IMR-90 (cell line): ENCODE measurements at regions of chr5 and their contacts with region 1.

Region 1: GRCh38 chr5:35926389-35927051 is 11.9 kb downstream of the CAPSL start:
- DNase-seq: peak; percentile 50
- ATAC-seq: peak; percentile 61
- H3K4me3 ChIP-seq: no peak overlapping the region
- H3K27ac ChIP-seq: no peak overlapping the region
- H3K4me1 ChIP-seq: peaks cover 3% of the 10 kb centered on the region; the same call in 1 of the 2 replicates
- H3K27me3 ChIP-seq: no peaks in the 10 kb centered on the region
- CTCF ChIP-seq: peak; percentile 82
- POLR2A ChIP-seq: no peak
- RAD21 ChIP-seq: peak; percentile 94

Region 2: DNA sequence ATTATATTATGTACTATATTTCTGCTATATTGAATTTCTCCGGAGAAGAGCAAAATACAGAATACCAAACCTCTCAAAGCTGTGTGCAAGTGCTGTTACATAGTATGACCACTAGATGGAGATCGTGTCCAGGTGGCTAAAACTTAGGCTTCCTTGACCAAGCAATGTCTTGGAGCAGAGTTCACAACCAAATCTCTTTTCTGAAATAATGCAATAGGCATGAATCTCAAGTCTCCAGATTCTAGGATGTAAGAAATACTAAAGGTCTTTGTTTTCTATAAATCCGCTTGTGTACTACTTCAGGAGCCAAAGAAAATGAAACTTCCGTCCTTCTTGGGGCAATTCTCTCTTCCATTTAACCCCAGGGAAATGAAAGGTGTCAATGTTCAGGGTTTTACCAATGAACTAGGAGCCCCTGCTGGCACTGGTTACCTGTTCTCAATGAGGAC is 1451.9 kb before region 1 on chr5:
- CTCF ChIA-PET with region 1: no interaction called
- POLR2A ChIA-PET with region 1: no interaction called
- dilution Hi-C with region 1: no loop called
- in situ Hi-C with region 1: no loop called
- intact Hi-C with region 1: loop called (anchors 10 kb)
- DNase-seq: peak; percentile 77
- ATAC-seq: peak; percentile 99
- H3K4me3 ChIP-seq: no peak overlapping the region
- H3K27ac ChIP-seq: no peak overlapping the region
- H3K4me1 ChIP-seq: no peaks in the 10 kb centered on the region
- H3K27me3 ChIP-seq: peaks cover 16% of the 10 kb centered on the region
- CTCF ChIP-seq: peak; percentile 94
- POLR2A ChIP-seq: peak; percentile 45; the same call in 1 of the 2 replicates
- RAD21 ChIP-seq: peak; percentile 96

Region 3: DNA sequence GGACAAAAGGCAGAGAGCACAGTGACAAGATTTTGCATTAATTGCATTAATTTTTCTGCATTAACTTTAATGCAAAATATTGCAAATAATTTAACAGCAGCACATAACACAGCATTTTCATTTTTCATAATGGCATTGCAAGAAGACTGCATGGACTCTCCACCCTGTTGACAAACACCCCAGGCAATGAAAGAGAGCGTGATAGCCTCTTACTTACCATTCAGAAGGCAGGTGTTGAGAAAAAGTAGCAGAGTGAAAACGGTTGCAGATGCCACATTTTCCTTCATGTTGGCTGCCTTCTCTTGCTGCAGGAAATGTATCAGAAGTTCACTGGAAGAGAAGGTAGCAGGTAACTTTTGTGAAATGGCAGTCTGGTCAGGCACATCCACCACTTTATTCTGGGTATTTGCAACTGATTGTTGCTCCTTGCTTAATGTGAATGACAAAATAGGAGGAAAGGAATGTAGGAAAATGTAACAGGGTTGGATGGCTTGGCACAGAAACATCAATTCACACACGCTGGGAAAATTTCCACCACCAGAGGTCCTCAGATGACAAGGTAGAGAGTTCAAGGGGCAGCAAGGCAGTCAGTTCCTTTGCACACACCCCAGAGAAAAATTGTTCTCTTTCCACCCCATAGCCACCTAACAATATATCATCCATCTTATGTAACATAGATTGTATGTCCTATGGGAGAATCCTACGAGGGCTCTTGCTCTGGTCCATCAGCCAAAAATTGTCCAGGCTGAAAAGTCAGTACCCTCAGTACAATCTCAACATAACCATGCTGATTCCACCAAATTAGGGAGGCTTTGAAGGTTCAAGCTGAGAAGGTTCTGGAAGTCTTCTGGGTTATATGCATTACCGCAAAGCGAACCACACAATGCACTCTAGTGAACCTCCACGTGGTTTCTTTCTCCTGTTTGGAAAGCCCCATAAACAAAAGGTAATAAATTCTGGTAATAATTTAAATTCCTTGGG is 836.9 kb before region 1 on chr5:
- CTCF ChIA-PET with region 1: interaction called, 3 read pairs
- POLR2A ChIA-PET with region 1: no interaction called
- dilution Hi-C with region 1: no loop called
- in situ Hi-C with region 1: loop called (anchors 5 kb)
- intact Hi-C with region 1: loop called (anchors 1 kb)
- DNase-seq: peak; percentile 72
- ATAC-seq: peak; percentile 86
- H3K4me3 ChIP-seq: no peak overlapping the region
- H3K27ac ChIP-seq: no peak overlapping the region
- H3K4me1 ChIP-seq: peaks cover 4% of the 10 kb centered on the region; the same call in 1 of the 2 replicates
- H3K27me3 ChIP-seq: peaks cover 6% of the 10 kb centered on the region
- CTCF ChIP-seq: peak; percentile 90
- POLR2A ChIP-seq: no peak
- RAD21 ChIP-seq: peak; percentile 97

Region 4: DNA sequence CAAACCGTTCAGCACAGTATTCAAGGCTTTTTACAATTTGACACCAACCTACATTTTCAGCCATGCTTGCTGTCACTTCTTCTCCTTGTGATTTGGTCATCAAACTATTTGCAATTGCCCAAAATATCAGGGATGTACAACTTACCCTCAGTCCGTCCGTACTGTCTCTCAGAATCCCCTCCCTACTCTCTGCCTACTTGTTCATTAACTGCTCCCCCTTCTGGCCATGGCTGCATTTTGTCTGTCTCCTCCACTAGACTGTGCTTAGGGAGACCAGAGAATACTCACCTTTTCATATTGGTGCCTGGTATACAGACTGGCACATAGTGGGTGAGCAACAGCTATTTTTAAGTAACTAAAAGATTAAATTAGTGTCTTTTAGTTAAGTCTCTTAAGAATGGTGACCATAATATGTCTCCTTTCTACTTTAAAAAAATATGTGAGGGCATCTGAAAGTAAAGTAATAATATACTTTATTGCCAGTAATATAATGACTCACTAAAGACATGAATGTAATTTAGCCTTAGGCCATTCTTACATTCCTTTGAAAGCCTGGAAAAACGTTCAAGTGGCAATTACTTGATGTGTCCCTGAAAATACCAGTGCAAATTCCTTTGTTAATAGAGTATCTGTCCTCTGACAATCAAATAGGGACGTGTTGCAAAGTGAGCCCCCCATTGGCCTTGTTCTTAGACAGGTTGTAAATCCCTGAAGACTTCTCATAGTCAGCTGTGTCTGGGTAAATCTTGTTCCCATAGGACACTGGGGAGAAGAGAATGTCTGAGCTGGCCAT is 724.0 kb before region 1 on chr5:
- CTCF ChIA-PET with region 1: no interaction called
- POLR2A ChIA-PET with region 1: no interaction called
- dilution Hi-C with region 1: no loop called
- in situ Hi-C with region 1: no loop called
- intact Hi-C with region 1: loop called (anchors 1 kb)
- DNase-seq: peak; percentile 52
- ATAC-seq: peak; percentile 84
- H3K4me3 ChIP-seq: no peak overlapping the region
- H3K27ac ChIP-seq: no peak overlapping the region
- H3K4me1 ChIP-seq: no peaks in the 10 kb centered on the region
- H3K27me3 ChIP-seq: peaks cover 24% of the 10 kb centered on the region
- CTCF ChIP-seq: peak; percentile 52
- POLR2A ChIP-seq: no peak
- RAD21 ChIP-seq: peak; percentile 47

Region 5: GRCh38 chr5:35617435-35618303 is 308.9 kb before region 1 on chr5 and contains the start of gene SPEF2:
- CTCF ChIA-PET with region 1: interaction called, 4 read pairs
- POLR2A ChIA-PET with region 1: no interaction called
- dilution Hi-C with region 1: no loop called
- in situ Hi-C with region 1: loop called (anchors 10 kb)
- intact Hi-C with region 1: loop called (anchors 1 kb)
- DNase-seq: peak; percentile 91
- ATAC-seq: peak; percentile 100
- H3K4me3 ChIP-seq: peak within 1 kb of the TSS; percentile 78
- H3K27ac ChIP-seq: peak within 1 kb of the TSS; percentile 35
- H3K4me1 ChIP-seq: peaks cover 3% of the 10 kb centered on the region; the same call in 1 of the 2 replicates
- H3K27me3 ChIP-seq: no peaks in the 10 kb centered on the region
- CTCF ChIP-seq: peak; percentile 89
- POLR2A ChIP-seq: no peak
- RAD21 ChIP-seq: peak; percentile 72
- total RNA-seq, gene SPEF2: 2.3 and 2.5 TPM in 2 replicates

Region 6: DNA sequence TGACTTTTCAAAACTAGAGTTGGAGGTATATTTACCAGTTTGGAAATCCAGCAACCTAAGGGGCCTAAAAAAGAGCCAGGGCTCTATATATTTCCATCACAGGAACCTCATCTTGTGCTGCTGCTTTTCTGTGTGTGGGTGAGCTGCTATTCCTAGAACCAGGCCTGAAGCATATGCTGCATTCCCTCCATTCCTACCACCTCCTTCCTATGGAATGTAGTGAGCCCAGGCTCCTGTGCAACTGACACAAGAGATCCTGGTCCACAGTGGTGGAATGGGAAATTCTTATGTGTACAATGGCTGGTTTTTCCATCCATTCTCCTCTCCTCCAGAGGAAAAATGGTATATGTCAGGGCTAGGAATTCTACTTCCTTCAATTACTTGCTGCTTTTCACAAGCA is 269.8 kb before region 1 on chr5:
- CTCF ChIA-PET with region 1: interaction called, 27 read pairs
- POLR2A ChIA-PET with region 1: no interaction called
- dilution Hi-C with region 1: no loop called
- in situ Hi-C with region 1: loop called (anchors 5 kb)
- intact Hi-C with region 1: loop called (anchors 1 kb)
- DNase-seq: peak; percentile 75
- ATAC-seq: peak; percentile 98
- H3K4me3 ChIP-seq: no peak overlapping the region
- H3K27ac ChIP-seq: no peak overlapping the region
- H3K4me1 ChIP-seq: peaks cover 2% of the 10 kb centered on the region; the same call in 1 of the 2 replicates
- H3K27me3 ChIP-seq: no peaks in the 10 kb centered on the region
- CTCF ChIP-seq: no peak
- POLR2A ChIP-seq: no peak
- RAD21 ChIP-seq: no peak

Region 7: GRCh38 chr5:35856765-35857291 is 69.7 kb before region 1 on chr5 and contains the start of gene IL7R:
- CTCF ChIA-PET with region 1: interaction called, 12 read pairs
- POLR2A ChIA-PET with region 1: no interaction called
- dilution Hi-C with region 1: no loop called
- in situ Hi-C with region 1: no loop called
- intact Hi-C with region 1: no loop called
- DNase-seq: peak; percentile 79
- ATAC-seq: peak; percentile 56
- H3K4me3 ChIP-seq: peak within 1 kb of the TSS; percentile 52; the same call in 1 of the 2 replicates
- H3K27ac ChIP-seq: peak within 1 kb of the TSS; percentile 83
- H3K4me1 ChIP-seq: peaks cover 11% of the 10 kb centered on the region
- H3K27me3 ChIP-seq: no peaks in the 10 kb centered on the region
- CTCF ChIP-seq: no peak
- POLR2A ChIP-seq: 0 out of 2 replicates have a peak, but pooled peaks have one; percentile 29
- RAD21 ChIP-seq: 0 out of 2 replicates have a peak, but pooled peaks have one; percentile 1
- total RNA-seq, gene IL7R: 56.9 and 71.7 TPM in 2 replicates